PC-3 (cell line): ENCODE measurements at regions of chr1 and their contacts with region 1.

Region 1: DNA sequence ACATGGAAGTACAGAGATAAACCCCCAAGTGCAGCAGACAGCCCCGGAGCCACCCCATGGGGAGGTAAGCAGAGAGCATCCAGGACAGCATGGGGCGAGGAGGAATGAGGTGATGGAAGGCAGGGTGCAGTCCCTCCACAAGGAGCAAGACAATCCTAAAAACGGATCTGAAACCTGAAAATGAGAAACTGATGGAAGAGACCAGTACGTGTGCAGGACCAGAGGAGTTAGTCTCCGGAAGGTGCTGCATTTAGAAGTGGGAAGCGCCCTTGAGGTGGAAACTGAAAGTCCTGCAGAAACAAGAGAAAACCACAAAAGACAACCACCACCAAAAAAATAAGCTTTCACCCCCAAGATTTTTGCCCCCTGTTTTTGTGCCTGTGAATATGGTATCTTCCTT is 17.4 kb upstream of the DDOST start:
- DNase-seq: no peak
- ATAC-seq: no peak
- H3K4me3 ChIP-seq: no peak overlapping the region
- H3K27ac ChIP-seq: no peak overlapping the region
- H3K4me1 ChIP-seq: no peaks in the 10 kb centered on the region
- H3K27me3 ChIP-seq: no peaks in the 10 kb centered on the region
- CTCF ChIP-seq: no peak

Region 2: GRCh38 chr1:20485527-20486456 is 192.8 kb before region 1 on chr1 and contains the start of gene CAMK2N1:
- CTCF ChIA-PET with region 1: no interaction called
- POLR2A ChIA-PET with region 1: no interaction called
- intact Hi-C with region 1: no loop called
- DNase-seq: peak; percentile 73
- ATAC-seq: peak; percentile 54
- H3K4me3 ChIP-seq: peak within 1 kb of the TSS; percentile 98
- H3K27ac ChIP-seq: peak within 1 kb of the TSS; percentile 87
- H3K4me1 ChIP-seq: peaks cover 32% of the 10 kb centered on the region
- H3K27me3 ChIP-seq: peaks cover 6% of the 10 kb centered on the region
- CTCF ChIP-seq: no peak
- total RNA-seq, gene CAMK2N1: 51.2 and 56.9 TPM in 2 replicates

Region 3: GRCh38 chr1:20661207-20662109 is 17.1 kb before region 1 on chr1 and contains the start of gene DDOST:
- CTCF ChIA-PET with region 1: interaction called, 11 read pairs
- POLR2A ChIA-PET with region 1: no interaction called
- intact Hi-C with region 1: no loop called
- DNase-seq: peak; percentile 99
- ATAC-seq: peak; percentile 96
- H3K4me3 ChIP-seq: peak within 1 kb of the TSS; percentile 97
- H3K27ac ChIP-seq: peak within 1 kb of the TSS; percentile 24; the same call in 1 of the 2 replicates
- H3K4me1 ChIP-seq: peaks cover 8% of the 10 kb centered on the region; the same call in 1 of the 2 replicates
- H3K27me3 ChIP-seq: no peaks in the 10 kb centered on the region
- CTCF ChIP-seq: peak; percentile 39; the same call in 1 of the 2 replicates
- total RNA-seq, gene DDOST: 334 and 357 TPM in 2 replicates